Pancreas (tissue), 10 donors: ENCODE measurements at regions of chr10 and their contacts with region 1.

Region 1: GRCh38 chr10:126935263-126935946 is 30.2 kb downstream of the DOCK1 start:
- DNase-seq: no peak
- ATAC-seq: no peak
- H3K4me3 ChIP-seq: no peak overlapping the region
- H3K27ac ChIP-seq: no peak overlapping the region
- H3K4me1 ChIP-seq: peaks cover 0 to 8% (median 3%) of the 10 kb centered on the region in 3 donors
- H3K27me3 ChIP-seq: no peaks in the 10 kb centered on the region
- CTCF ChIP-seq: no peak

Region 2: GRCh38 chr10:126110489-126111180 is 824.8 kb before region 1 on chr10:
- intact Hi-C with region 1: loop called in 1 of 3 experiments (anchors 10 kb)
- DNase-seq: no peak
- ATAC-seq: peak in 2 of 4 donors; percentile 44 to 60
- H3K4me3 ChIP-seq: no peak overlapping the region
- H3K27ac ChIP-seq: no peak overlapping the region
- H3K4me1 ChIP-seq: no peaks in the 10 kb centered on the region
- H3K27me3 ChIP-seq: no peaks in the 10 kb centered on the region
- CTCF ChIP-seq: no peak